ENCODE measurements at regions of chr5 and their contacts with region 1.

Region 1: GRCh38 chr5:73215891-73216610 is 43.1 kb downstream of the TMEM174 start:
- DNase-seq: peak; percentile 60 to 75 (median 72)
- H3K4me3 ChIP-seq: peak overlapping the region in 6 of 7 experiments; percentile 25 to 72 (median 42)
- H3K27ac ChIP-seq: no peak overlapping the region
- H3K4me1 ChIP-seq: peaks cover 0 to 12% (median 9%) of the 10 kb centered on the region in 4 experiments
- H3K27me3 ChIP-seq: peaks cover 22 to 80% (median 45%) of the 10 kb centered on the region in 5 experiments

Region 2: DNA sequence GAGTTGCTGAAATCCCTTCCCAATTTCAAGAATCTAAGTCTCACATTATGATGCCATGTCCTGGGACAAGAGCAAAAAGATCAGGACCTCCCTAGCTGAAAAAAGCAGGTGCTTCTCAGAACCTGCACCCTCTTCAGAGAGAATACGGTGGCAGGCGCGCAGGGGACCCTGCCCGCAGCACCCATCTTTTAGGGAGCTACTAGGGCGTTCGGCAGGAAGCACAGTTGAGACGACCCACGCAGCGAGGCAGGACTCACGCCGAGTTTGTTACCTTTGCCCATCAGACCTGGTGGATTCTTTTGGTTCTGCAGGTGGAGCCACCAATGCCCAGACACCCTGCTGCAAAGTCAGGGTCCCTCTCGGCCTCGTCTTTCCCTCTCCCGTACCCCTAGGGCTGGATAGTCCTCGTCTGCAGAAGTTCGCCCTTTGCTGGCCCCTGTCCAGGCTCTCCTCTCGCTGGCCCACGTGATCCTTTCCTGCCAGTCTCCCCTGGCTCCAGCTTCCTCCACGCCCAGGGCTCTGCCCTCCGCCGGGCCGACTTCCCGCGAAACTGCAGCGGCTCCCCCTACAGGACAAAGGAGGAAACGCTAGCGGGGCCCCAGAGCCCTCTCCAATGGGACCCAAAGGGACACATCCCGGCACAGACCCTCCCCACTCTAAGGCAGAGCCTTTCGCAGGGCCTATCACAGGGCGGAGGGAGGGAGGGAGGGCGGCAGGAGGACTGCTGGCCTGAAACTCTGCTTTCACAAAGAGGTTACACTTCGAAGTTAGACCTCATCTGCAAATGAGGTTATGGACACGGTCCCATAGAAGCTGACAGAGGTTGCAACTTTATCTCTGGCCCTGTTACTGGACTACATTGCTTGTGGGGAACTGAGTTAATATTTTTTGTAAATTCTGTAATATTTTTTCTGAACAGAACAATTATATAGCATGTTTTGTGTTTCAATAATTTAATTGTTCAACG is 14.2 kb before region 1 on chr5:
- CTCF ChIA-PET with region 1: interaction called, 12 read pairs
- POLR2A ChIA-PET with region 1: no interaction called
- DNase-seq: peak; percentile 64 to 71 (median 69)
- H3K4me3 ChIP-seq: peak overlapping the region in 3 of 7 experiments; percentile 10 to 45 (median 42)
- H3K27ac ChIP-seq: no peak overlapping the region
- H3K4me1 ChIP-seq: peaks cover 0 to 4% (median 1%) of the 10 kb centered on the region in 4 experiments
- H3K27me3 ChIP-seq: peaks cover 5 to 56% (median 19%) of the 10 kb centered on the region in 5 experiments

Region 3: GRCh38 chr5:73229209-73229661 is 13.2 kb after region 1 on chr5:
- CTCF ChIA-PET with region 1: interaction called, 35 read pairs
- POLR2A ChIA-PET with region 1: no interaction called
- DNase-seq: no peak
- H3K4me3 ChIP-seq: no peak overlapping the region
- H3K27ac ChIP-seq: no peak overlapping the region
- H3K4me1 ChIP-seq: peaks cover 0 to 20% (median 14%) of the 10 kb centered on the region in 4 experiments
- H3K27me3 ChIP-seq: peaks cover 31 to 100% (median 64%) of the 10 kb centered on the region in 5 experiments

Region 4: DNA sequence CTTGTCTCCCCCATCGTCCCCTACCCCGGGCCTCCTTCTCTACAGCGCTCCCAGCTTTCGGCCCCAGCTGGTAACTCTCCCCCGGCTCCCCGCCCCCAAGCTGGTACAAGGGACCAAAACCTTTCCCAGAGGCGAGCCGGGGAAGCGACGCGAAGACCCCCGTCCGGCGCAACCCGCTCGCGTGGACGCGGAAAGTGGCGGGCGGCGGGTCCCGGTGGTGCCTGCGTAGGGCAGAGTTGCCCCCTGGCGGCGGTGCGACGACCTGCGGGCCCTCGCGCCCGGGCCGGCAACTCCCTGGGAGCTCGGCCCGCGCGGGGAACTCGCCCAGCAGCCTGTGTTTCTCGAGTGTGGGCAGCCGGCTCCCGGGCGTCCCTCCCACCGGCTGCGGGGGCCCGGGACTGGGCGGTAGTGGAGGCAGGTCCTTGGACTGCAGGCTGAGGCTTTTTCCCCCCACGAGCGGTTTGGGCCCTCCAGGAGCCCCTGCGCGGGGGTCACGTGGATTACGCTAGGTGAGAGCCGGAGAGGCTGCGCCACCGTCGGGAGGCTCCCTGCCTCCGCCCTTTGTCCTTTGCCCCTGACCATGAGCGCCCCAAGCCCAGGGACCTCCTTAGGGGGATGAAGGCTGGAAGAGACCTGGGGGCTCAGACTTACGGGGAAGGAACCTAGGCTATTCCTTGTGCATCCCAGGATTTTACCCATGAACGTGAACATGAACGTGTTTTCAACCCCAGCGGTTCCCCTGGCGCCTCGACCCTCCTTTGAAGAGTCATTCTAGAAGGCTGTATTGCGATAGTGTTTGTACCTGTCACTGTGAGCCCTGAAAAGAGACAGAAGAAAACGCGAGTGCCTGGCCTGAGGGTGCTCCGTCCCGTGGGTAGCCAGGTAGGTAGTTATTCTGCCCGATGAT is 235.4 kb after region 1 on chr5:
- CTCF ChIA-PET with region 1: interaction called, 13 read pairs
- POLR2A ChIA-PET with region 1: no interaction called
- DNase-seq: peak; percentile 61 to 72 (median 72)
- H3K4me3 ChIP-seq: peak overlapping the region in 1 of 7 experiments; percentile 26
- H3K27ac ChIP-seq: no peak overlapping the region
- H3K4me1 ChIP-seq: peaks cover 2 to 27% (median 24%) of the 10 kb centered on the region in 4 experiments
- H3K27me3 ChIP-seq: peaks cover 38 to 83% (median 52%) of the 10 kb centered on the region in 5 experiments